ENCODE measurements at regions of chr1 and their contacts with region 1.

Region 1: GRCh38 chr1:180863158-180863775 is 49.4 kb upstream of the KIAA1614 start:
- DNase-seq: no peak
- ATAC-seq: peak; percentile 36 to 41
- H3K4me3 ChIP-seq: no peak overlapping the region
- H3K27ac ChIP-seq: no peak overlapping the region
- H3K4me1 ChIP-seq: no peaks in the 10 kb centered on the region
- H3K27me3 ChIP-seq: no peaks in the 10 kb centered on the region

Region 2: GRCh38 chr1:180515864-180516388 is 347.3 kb before region 1 on chr1:
- intact Hi-C with region 1: loop called in 3 of 4 experiments (anchors 5 kb)
- DNase-seq: peak in 2 of 3 donors; percentile 51 to 57
- ATAC-seq: peak; percentile 96 to 97
- H3K4me3 ChIP-seq: no peak overlapping the region
- H3K27ac ChIP-seq: no peak overlapping the region
- H3K4me1 ChIP-seq: peaks cover 3% of the 10 kb centered on the region
- H3K27me3 ChIP-seq: no peaks in the 10 kb centered on the region

Region 3: GRCh38 chr1:180521474-180522207 is 341.6 kb before region 1 on chr1:
- intact Hi-C with region 1: loop called in 3 of 4 experiments (anchors 5 kb)
- DNase-seq: no peak
- ATAC-seq: no peak
- H3K4me3 ChIP-seq: no peak overlapping the region
- H3K27ac ChIP-seq: peak overlapping the region; percentile 9
- H3K4me1 ChIP-seq: peaks cover 7% of the 10 kb centered on the region
- H3K27me3 ChIP-seq: no peaks in the 10 kb centered on the region

Region 4: DNA sequence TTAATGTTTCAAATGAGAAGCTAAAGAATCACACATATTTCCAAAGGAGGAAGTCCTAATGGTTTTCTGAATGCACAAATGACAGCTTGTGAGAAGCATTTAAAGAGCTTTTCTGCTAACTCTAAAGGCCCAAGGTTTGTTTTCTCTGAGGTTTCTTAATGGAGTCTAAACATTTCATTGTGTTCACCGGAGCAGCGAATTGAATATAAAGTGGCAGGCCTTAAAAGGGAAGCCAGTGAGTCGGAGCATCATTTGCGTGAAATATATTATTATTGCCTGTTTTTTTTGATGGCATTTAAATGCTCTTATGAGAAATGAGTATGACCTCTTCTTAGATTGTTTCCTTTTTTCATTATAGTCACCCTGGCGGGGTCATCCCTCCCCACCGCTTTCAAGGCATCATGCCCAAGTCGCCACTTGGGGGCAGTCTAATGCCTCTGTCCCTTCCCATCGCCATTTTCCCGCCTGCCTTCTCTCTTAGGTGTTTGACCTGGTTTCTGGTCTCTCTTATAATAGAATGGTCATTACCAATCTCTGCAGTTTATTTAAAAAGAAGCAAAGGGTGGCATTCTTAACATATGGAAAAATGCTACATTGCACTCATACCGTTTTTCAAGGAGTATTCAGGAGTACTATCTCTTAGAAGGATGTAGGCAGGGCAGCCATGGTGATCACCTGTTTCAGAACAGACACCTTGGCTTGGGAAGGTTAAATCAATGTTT is 329.8 kb before region 1 on chr1:
- intact Hi-C with region 1: loop called in 3 of 4 experiments (anchors 5 kb)
- DNase-seq: peak; percentile 67 to 86 (median 79)
- ATAC-seq: peak; percentile 65 to 71
- H3K4me3 ChIP-seq: no peak overlapping the region
- H3K27ac ChIP-seq: no peak overlapping the region
- H3K4me1 ChIP-seq: no peaks in the 10 kb centered on the region
- H3K27me3 ChIP-seq: no peaks in the 10 kb centered on the region